GM12878 (cell line): ENCODE measurements at regions of chr2 and their contacts with region 1.

Region 1: DNA sequence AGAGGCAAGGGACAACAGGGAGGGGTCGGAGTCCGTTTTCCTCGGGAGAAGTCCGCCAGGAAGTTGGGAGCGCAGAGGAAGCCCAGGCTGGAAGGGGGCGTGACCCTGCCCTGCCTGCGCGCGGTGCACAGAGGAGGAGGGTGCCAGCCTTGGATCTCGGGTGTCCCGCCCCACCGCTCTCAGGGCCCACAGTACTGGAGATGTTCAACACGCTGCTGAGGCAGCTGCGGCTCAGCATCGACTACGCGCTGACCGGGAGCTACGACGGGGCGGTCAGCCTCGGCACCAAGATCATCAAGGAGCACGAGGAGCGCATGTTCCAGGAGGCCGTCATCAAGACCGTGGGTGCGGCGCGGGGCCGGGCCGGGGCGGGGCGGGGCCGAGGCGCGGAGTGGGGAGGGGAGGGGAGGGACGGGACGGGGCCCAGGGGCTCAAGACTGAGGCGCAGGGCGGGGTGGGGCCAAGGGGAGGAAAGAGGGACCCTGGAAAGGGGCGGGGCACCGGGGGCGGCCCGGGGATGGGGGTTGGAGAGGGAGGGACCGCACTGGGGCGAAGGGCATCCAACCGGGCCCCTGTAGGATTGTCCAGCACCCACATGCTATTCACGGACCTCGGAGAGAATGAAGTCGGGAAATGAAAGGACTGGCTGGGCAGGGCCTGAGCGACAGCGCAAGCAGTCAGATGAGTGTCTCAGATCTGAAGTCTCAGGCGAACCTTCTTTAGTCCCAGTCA is 36.6 kb downstream of the POMC start:
- DNase-seq: no peak
- ATAC-seq: no peak
- H3K4me3 ChIP-seq: no peak overlapping the region
- H3K27ac ChIP-seq: no peak overlapping the region
- H3K4me1 ChIP-seq: no peaks in the 10 kb centered on the region
- H3K27me3 ChIP-seq: peaks cover 0 to 5% of the 10 kb centered on the region in 2 experiments; a peak in 3 of 4 replicates
- CTCF ChIP-seq: no peak
- EP300 ChIP-seq: no peak
- POLR2A ChIP-seq: no peak
- RAD21 ChIP-seq: no peak

Region 2: GRCh38 chr2:24827321-24828237 is 304.2 kb before region 1 on chr2:
- CTCF ChIA-PET with region 1: interaction called, 9 read pairs
- POLR2A ChIA-PET with region 1: no interaction called
- RAD21 ChIA-PET with region 1: interaction called, 7 read pairs
- SMC1A ChIA-PET with region 1: no interaction called
- in situ Hi-C with region 1: no loop called
- intact Hi-C with region 1: loop called (anchors 10 kb)
- DNase-seq: peak; percentile 24
- ATAC-seq: peak; percentile 96
- H3K4me3 ChIP-seq: no peak overlapping the region
- H3K27ac ChIP-seq: no peak overlapping the region
- H3K4me1 ChIP-seq: no peaks in the 10 kb centered on the region; the same call in 1 of the 2 replicates
- H3K27me3 ChIP-seq: no peaks in the 10 kb centered on the region
- CTCF ChIP-seq: peak; percentile 92 to 97 (median 92)
- EP300 ChIP-seq: no peak
- POLR2A ChIP-seq: peak; percentile 40; the same call in 1 of the 2 replicates
- RAD21 ChIP-seq: peak; percentile 95

Region 3: GRCh38 chr2:24977631-24978030 is 154.1 kb before region 1 on chr2:
- CTCF ChIA-PET with region 1: interaction called, 174 read pairs
- POLR2A ChIA-PET with region 1: interaction called, 6 read pairs
- RAD21 ChIA-PET with region 1: interaction called, 97 read pairs
- SMC1A ChIA-PET with region 1: interaction called, 74 read pairs
- in situ Hi-C with region 1: loop called (anchors 5 kb)
- intact Hi-C with region 1: loop called (anchors 1 kb)
- DNase-seq: no peak
- ATAC-seq: no peak
- H3K4me3 ChIP-seq: no peak overlapping the region
- H3K27ac ChIP-seq: no peak overlapping the region
- H3K4me1 ChIP-seq: no peaks in the 10 kb centered on the region
- H3K27me3 ChIP-seq: no peaks in the 10 kb centered on the region
- CTCF ChIP-seq: no peak
- EP300 ChIP-seq: no peak
- POLR2A ChIP-seq: no peak
- RAD21 ChIP-seq: no peak

Region 4: DNA sequence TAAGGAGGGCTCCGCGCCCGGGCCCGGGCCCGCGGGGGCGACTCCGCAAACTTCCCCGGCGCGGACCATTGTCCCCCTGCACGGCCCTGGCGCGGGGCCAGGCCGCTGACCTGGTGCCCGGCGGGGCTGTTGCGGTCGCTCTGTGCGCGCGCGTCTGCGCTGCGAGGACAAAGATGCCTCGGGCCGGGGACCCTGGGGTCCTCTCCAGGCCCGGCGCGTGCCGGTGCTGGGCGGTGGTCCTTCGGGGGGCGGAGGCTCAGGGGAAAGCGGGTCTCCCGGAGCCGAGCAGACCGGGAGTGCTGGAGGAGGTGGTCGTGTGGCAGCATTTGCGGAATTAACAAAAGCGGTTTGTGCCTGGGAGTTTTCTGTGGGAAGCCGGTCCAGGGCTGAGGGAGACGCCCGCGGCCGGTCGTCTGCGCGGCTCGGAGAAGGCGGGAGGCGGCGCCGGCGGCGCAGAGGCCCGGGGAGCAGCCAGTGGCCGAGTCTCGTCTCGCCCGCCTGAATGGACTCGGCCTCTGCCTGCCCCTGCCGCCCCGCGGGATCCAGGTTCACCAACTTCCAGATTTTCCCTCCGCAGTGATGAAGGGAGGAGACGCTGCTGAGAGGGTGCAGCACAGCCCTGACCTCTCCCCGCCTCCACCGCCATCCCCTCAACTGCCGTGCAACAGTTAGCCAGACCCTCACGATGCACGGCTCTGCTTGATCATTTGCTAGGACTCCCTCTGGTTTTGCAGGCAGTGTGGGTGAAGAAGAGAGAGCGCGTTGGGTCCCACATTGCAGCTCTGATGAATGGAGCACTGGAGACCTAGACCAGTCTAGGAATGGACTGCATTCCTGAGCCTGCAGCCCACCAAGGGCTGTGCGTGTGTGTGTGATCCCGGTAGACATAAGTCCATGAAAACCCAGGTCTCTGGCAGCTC is 89.2 kb before region 1 on chr2:
- CTCF ChIA-PET with region 1: no interaction called
- POLR2A ChIA-PET with region 1: interaction called, 10 read pairs
- RAD21 ChIA-PET with region 1: no interaction called
- SMC1A ChIA-PET with region 1: no interaction called
- in situ Hi-C with region 1: no loop called
- intact Hi-C with region 1: no loop called
- DNase-seq: no peak
- ATAC-seq: no peak
- H3K4me3 ChIP-seq: peak overlapping the region; percentile 83
- H3K27ac ChIP-seq: no peak overlapping the region
- H3K4me1 ChIP-seq: peaks cover 24% of the 10 kb centered on the region
- H3K27me3 ChIP-seq: peaks cover 2 to 5% of the 10 kb centered on the region in 2 experiments; a peak in 3 of 4 replicates
- CTCF ChIP-seq: no peak
- EP300 ChIP-seq: no peak
- POLR2A ChIP-seq: no peak
- RAD21 ChIP-seq: no peak